CD8-positive, alpha-beta memory T cell (primary cell): ENCODE measurements at regions of chr4 and their contacts with region 1.

Region 1: GRCh38 chr4:177070533-177071058 is 239.1 kb upstream of the NEIL3 start:
- DNase-seq: no peak
- H3K4me3 ChIP-seq: no peak overlapping the region
- H3K4me3 Mint-ChIP-seq: no peak overlapping the region
- H3K27ac ChIP-seq: no peak overlapping the region
- H3K27ac Mint-ChIP-seq: no peak overlapping the region
- H3K4me1 ChIP-seq: no peaks in the 10 kb centered on the region
- H3K4me1 Mint-ChIP-seq: no peaks in the 10 kb centered on the region
- H3K27me3 ChIP-seq: no peaks in the 10 kb centered on the region
- H3K27me3 Mint-ChIP-seq: peaks cover 0 to 3% of the 10 kb centered on the region in 2 donors

Region 2: DNA sequence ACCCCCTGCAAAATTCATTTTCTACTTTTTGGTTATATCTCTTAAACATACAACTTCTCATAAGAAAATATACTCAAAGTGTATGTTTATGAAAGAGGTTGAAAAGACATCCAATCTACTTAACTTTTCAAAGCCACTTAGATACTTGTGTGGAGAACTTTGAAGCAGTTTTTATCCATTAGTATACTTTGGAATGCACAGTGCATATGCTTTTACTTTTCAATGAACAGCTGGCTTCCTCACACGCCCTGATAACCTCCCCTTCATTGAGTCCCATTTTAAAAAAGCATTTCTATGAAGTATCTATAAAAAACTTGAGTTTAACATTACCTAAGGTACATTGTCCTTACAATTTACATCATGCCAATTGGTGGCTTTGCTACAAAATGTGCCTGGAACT is 351.7 kb before region 1 on chr4:
- CTCF ChIA-PET with region 1: no interaction called
- POLR2A ChIA-PET with region 1: interaction called, 15 read pairs
- DNase-seq: no peak
- H3K4me3 ChIP-seq: no peak overlapping the region
- H3K4me3 Mint-ChIP-seq: no peak overlapping the region
- H3K27ac ChIP-seq: no peak overlapping the region
- H3K27ac Mint-ChIP-seq: no peak overlapping the region
- H3K4me1 ChIP-seq: no peaks in the 10 kb centered on the region
- H3K4me1 Mint-ChIP-seq: no peaks in the 10 kb centered on the region
- H3K27me3 ChIP-seq: no peaks in the 10 kb centered on the region
- H3K27me3 Mint-ChIP-seq: no peaks in the 10 kb centered on the region

Region 3: GRCh38 chr4:177041356-177041755 is 29.2 kb before region 1 on chr4:
- CTCF ChIA-PET with region 1: no interaction called
- POLR2A ChIA-PET with region 1: no interaction called
- DNase-seq: no peak
- H3K4me3 ChIP-seq: no peak overlapping the region
- H3K4me3 Mint-ChIP-seq: no peak overlapping the region
- H3K27ac ChIP-seq: no peak overlapping the region
- H3K27ac Mint-ChIP-seq: no peak overlapping the region
- H3K4me1 ChIP-seq: no peaks in the 10 kb centered on the region
- H3K4me1 Mint-ChIP-seq: no peaks in the 10 kb centered on the region
- H3K27me3 ChIP-seq: no peaks in the 10 kb centered on the region
- H3K27me3 Mint-ChIP-seq: peaks cover 4 to 5% of the 10 kb centered on the region in 2 donors